K562 (cell line): ENCODE measurements at regions of chr6 and their contacts with region 1.

Region 1: GRCh38 chr6:45377554-45378333 is at the start of gene SUPT3H:
- DNase-seq: peak; percentile 96 to 99 (median 97)
- ATAC-seq: peak; percentile 93
- H3K4me3 ChIP-seq: peak within 1 kb of the TSS; percentile 67
- H3K27ac ChIP-seq: peak within 1 kb of the TSS; percentile 93
- H3K4me1 ChIP-seq: peaks cover 2 to 9% of the 10 kb centered on the region in 2 experiments; a peak in 1 of 5 replicates
- H3K27me3 ChIP-seq: no peaks in the 10 kb centered on the region
- CTCF ChIP-seq: peak; percentile 41 to 46 (median 42); a peak in 5 of 6 replicates
- EP300 ChIP-seq: no peak
- POLR2A ChIP-seq: peak; percentile 97
- RAD21 ChIP-seq: peak; percentile 50 to 56
- polyA plus RNA-seq, gene SUPT3H: 13.2 to 16.3 TPM

Region 2: GRCh38 chr6:45187836-45188235 is 189.9 kb before region 1 on chr6:
- CTCF ChIA-PET with region 1: no interaction called
- POLR2A ChIA-PET with region 1: no interaction called
- in situ Hi-C with region 1: no loop called
- intact Hi-C with region 1: loop called (anchors 10 kb)
- DNase-seq: no peak
- ATAC-seq: no peak
- H3K4me3 ChIP-seq: no peak overlapping the region
- H3K27ac ChIP-seq: no peak overlapping the region
- H3K4me1 ChIP-seq: peaks cover 0 to 17% of the 10 kb centered on the region in 2 experiments; a peak in 2 of 5 replicates
- H3K27me3 ChIP-seq: no peaks in the 10 kb centered on the region
- CTCF ChIP-seq: no peak
- EP300 ChIP-seq: no peak
- POLR2A ChIP-seq: no peak
- RAD21 ChIP-seq: no peak

Region 3: DNA sequence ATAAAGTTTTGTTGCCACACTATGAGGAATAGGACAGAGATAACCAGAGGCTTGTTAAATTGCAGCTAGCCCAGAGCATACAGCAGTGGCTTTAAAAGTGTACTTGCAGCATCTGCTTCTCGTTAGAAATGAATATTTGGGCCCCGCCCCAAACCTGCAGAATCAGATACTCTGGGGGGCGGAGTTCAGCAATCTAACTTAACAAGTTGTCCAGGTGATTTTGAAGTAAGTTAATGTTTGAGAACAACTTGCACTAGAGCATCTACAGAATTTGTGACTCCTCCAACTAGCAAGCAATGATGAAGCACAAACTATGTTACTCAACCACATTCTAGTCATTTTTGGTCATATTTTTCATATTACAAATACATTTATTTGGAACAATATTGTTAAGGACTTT is 10.6 kb after region 1 on chr6:
- CTCF ChIA-PET with region 1: no interaction called
- POLR2A ChIA-PET with region 1: interaction called, 12 read pairs
- in situ Hi-C with region 1: no loop called
- intact Hi-C with region 1: no loop called
- DNase-seq: peak in 1 of 4 experiments; percentile 20
- ATAC-seq: peak; percentile 66
- H3K4me3 ChIP-seq: no peak overlapping the region
- H3K27ac ChIP-seq: no peak overlapping the region
- H3K4me1 ChIP-seq: peaks cover 0 to 5% of the 10 kb centered on the region in 2 experiments; a peak in 1 of 5 replicates
- H3K27me3 ChIP-seq: no peaks in the 10 kb centered on the region
- CTCF ChIP-seq: no peak
- EP300 ChIP-seq: no peak
- POLR2A ChIP-seq: no peak
- RAD21 ChIP-seq: no peak

Region 4: GRCh38 chr6:45445749-45446549 is 68.2 kb after region 1 on chr6:
- CTCF ChIA-PET with region 1: no interaction called
- POLR2A ChIA-PET with region 1: no interaction called
- in situ Hi-C with region 1: no loop called
- intact Hi-C with region 1: loop called (anchors 2 kb)
- DNase-seq: peak; percentile 65 to 94 (median 78)
- ATAC-seq: peak; percentile 90
- H3K4me3 ChIP-seq: no peak overlapping the region
- H3K27ac ChIP-seq: peak overlapping the region; percentile 93
- H3K4me1 ChIP-seq: peaks cover 5 to 48% of the 10 kb centered on the region in 2 experiments
- H3K27me3 ChIP-seq: no peaks in the 10 kb centered on the region
- CTCF ChIP-seq: no peak
- EP300 ChIP-seq: peak; percentile 97
- POLR2A ChIP-seq: peak; percentile 65
- RAD21 ChIP-seq: peak; percentile 20 to 48

Region 5: GRCh38 chr6:45714741-45715507 is 337.2 kb after region 1 on chr6:
- CTCF ChIA-PET with region 1: no interaction called
- POLR2A ChIA-PET with region 1: no interaction called
- in situ Hi-C with region 1: no loop called
- intact Hi-C with region 1: loop called (anchors 5 kb)
- DNase-seq: peak; percentile 20 to 69 (median 44)
- ATAC-seq: peak; percentile 94
- H3K4me3 ChIP-seq: no peak overlapping the region
- H3K27ac ChIP-seq: no peak overlapping the region
- H3K4me1 ChIP-seq: no peaks in the 10 kb centered on the region; a peak in 1 of 5 replicates
- H3K27me3 ChIP-seq: peaks cover 21 to 40% of the 10 kb centered on the region in 2 experiments
- CTCF ChIP-seq: peak; percentile 74 to 87 (median 77)
- EP300 ChIP-seq: no peak
- POLR2A ChIP-seq: no peak
- RAD21 ChIP-seq: peak; percentile 94 to 97